Heart left ventricle (tissue), 16 donors: ENCODE measurements at regions of chr12 and their contacts with region 1.

Region 1: DNA sequence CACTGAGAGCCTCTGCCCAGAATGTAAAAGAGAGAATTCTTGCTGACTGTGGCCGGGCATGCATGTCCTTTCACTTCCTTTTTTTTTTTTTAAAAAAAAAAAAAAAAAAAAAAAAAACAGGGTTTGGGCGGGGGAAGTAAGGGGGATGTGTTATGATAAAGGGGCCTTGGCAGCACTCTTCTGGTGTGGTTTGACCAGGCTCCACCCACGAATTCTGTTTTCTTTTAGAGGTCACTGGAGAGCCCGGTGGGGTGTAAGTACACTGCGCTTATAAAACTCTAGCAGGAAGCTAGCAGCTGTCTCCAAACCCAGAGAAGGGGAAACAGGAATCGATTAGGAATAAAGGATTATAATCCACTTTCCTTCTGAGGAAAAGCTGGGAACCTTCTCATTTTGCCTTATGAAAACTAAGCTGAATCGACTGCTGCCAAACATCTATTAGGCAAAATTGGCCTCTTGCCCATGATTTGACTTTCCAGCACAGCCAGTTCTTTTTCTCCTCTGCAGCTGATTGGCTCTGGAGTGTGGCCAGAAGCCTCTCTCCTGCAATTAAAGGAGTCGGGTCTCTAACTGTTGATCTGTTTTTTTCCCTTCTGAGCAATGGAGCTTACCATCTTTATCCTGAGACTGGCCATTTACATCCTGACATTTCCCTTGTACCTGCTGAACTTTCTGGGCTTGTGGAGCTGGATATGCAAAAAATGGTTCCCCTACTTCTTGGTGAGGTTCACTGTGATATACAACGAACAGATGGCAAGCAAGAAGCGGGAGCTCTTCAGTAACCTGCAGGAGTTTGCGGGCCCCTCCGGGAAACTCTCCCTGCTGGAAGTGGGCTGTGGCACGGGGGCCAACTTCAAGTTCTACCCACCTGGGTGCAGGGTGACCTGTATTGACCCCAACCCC is 27.7 kb upstream of the HIGD1C start:
- DNase-seq: peak; percentile 85 to 95 (median 93)
- ATAC-seq: peak; percentile 94 to 96 (median 96)
- H3K4me3 ChIP-seq: peak overlapping the region; percentile 63 to 88 (median 71)
- H3K27ac ChIP-seq: peak overlapping the region; percentile 83 to 95 (median 88)
- H3K4me1 ChIP-seq: peaks cover 0 to 59% (median 40%) of the 10 kb centered on the region in 12 donors
- H3K27me3 ChIP-seq: no peaks in the 10 kb centered on the region
- CTCF ChIP-seq: no peak
- POLR2A ChIP-seq: peak in 1 of 2 donors; percentile 50

Region 2: GRCh38 chr12:50542448-50542847 is 382.2 kb before region 1 on chr12:
- intact Hi-C with region 1: no loop called
- DNase-seq: no peak
- ATAC-seq: no peak
- H3K4me3 ChIP-seq: no peak overlapping the region
- H3K27ac ChIP-seq: no peak overlapping the region
- H3K4me1 ChIP-seq: peaks cover 0 to 41% (median 9%) of the 10 kb centered on the region in 12 donors
- H3K27me3 ChIP-seq: no peaks in the 10 kb centered on the region
- CTCF ChIP-seq: no peak
- POLR2A ChIP-seq: no peak

Region 3: GRCh38 chr12:50763639-50764285 is 160.9 kb before region 1 on chr12 and contains the start of gene ATF1:
- intact Hi-C with region 1: loop called in 2 of 10 experiments (anchors 5 to 10 kb)
- DNase-seq: peak; percentile 89 to 95 (median 93)
- ATAC-seq: peak; percentile 93 to 96 (median 95)
- H3K4me3 ChIP-seq: peak within 1 kb of the TSS; percentile 72 to 100 (median 98)
- H3K27ac ChIP-seq: peak within 1 kb of the TSS; percentile 95 to 99 (median 98)
- H3K4me1 ChIP-seq: peaks cover 3 to 48% (median 17%) of the 10 kb centered on the region in 12 donors
- H3K27me3 ChIP-seq: no peaks in the 10 kb centered on the region
- CTCF ChIP-seq: no peak
- POLR2A ChIP-seq: peak in 1 of 2 donors; percentile 64
- total RNA-seq, gene ATF1: 9.7 to 27.4 (median 22.3) TPM

Region 4: GRCh38 chr12:50776749-50777728 is 147.7 kb before region 1 on chr12:
- intact Hi-C with region 1: no loop called
- DNase-seq: no peak
- ATAC-seq: no peak
- H3K4me3 ChIP-seq: no peak overlapping the region
- H3K27ac ChIP-seq: no peak overlapping the region
- H3K4me1 ChIP-seq: peaks cover 0 to 6% (median 0%) of the 10 kb centered on the region in 12 donors
- H3K27me3 ChIP-seq: no peaks in the 10 kb centered on the region
- CTCF ChIP-seq: no peak
- POLR2A ChIP-seq: no peak

Region 5: GRCh38 chr12:50825372-50825838 is 99.3 kb before region 1 on chr12:
- intact Hi-C with region 1: loop called in 4 of 10 experiments (anchors 2 to 10 kb)
- DNase-seq: no peak
- ATAC-seq: peak; percentile 54 to 83 (median 70)
- H3K4me3 ChIP-seq: no peak overlapping the region
- H3K27ac ChIP-seq: peak overlapping the region in 10 of 12 donors; percentile 18 to 70 (median 62)
- H3K4me1 ChIP-seq: peaks cover 0 to 11% (median 0%) of the 10 kb centered on the region in 12 donors
- H3K27me3 ChIP-seq: no peaks in the 10 kb centered on the region
- CTCF ChIP-seq: peak; percentile 30 to 66 (median 53)
- POLR2A ChIP-seq: no peak

Region 6: GRCh38 chr12:50979369-50980052 is 54.8 kb after region 1 on chr12:
- intact Hi-C with region 1: loop called in 3 of 10 experiments (anchors 5 to 10 kb)
- DNase-seq: no peak
- ATAC-seq: no peak
- H3K4me3 ChIP-seq: no peak overlapping the region
- H3K27ac ChIP-seq: no peak overlapping the region
- H3K4me1 ChIP-seq: peaks cover 0 to 5% (median 3%) of the 10 kb centered on the region in 12 donors
- H3K27me3 ChIP-seq: no peaks in the 10 kb centered on the region
- CTCF ChIP-seq: no peak
- POLR2A ChIP-seq: no peak